CD14-positive monocyte (primary cell): ENCODE measurements at regions of chr9 and their contacts with region 1.

Region 1: DNA sequence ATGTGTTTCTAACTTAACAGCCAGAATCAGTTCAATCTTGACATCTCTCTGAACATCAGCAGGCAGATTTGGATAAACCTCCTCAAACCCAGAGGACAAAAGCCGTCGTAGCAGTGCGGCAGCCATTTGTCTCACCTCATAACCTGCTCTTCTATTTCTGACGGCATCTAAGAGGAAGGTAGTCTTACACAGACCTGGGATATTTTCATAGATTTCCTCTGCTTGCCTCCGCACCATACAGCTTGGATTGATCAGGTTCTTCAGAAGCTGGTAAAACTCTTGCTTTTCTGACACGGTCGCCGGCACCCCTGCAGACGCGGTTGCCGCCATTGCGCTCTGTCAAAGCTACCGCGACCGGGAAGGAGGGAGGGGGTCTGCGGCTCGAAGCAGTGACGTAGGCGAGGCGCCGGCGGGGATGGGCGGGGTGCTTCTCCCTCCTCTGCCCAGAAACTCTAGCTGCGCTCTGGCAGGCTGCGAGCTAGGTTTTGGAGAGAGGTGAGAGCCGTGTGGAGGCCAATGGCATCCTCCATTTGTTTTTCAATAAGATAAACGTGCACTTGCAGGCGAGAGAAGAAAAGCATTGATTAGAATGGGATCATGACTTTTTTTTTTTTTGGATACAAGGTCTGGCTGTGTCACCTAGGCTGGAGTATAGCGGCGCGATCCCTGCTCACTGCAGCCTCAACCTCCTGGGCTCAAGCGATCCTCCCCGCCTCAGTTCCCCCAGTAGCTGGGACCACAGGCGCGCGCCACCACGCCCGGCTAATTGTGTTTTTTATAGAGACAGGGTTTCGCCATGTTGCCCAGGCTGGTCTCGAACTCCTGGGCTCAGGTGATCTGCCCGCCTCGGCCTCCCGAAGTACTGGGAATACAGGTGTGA is at the start of gene RANBP6:
- DNase-seq: peak; percentile 79 to 86 (median 84)
- H3K4me3 ChIP-seq: peak within 1 kb of the TSS; percentile 83 to 99 (median 87)
- H3K4me3 Mint-ChIP-seq: peak within 1 kb of the TSS; percentile 90 to 97
- H3K27ac ChIP-seq: peak within 1 kb of the TSS; percentile 55 to 95
- H3K27ac Mint-ChIP-seq: peak within 1 kb of the TSS; percentile 96 to 97 (median 96)
- H3K4me1 ChIP-seq: peaks cover 19 to 24% of the 10 kb centered on the region in 2 donors
- H3K4me1 Mint-ChIP-seq: peaks cover 21% of the 10 kb centered on the region
- H3K27me3 ChIP-seq: no peaks in the 10 kb centered on the region
- H3K27me3 Mint-ChIP-seq: no peaks in the 10 kb centered on the region
- CTCF ChIP-seq: no peak
- polyA plus RNA-seq, gene RANBP6: 6.1 to 16.0 (median 15.7) TPM

Region 2: GRCh38 chr9:5817869-5818268 is 197.6 kb before region 1 on chr9:
- intact Hi-C with region 1: no loop called
- DNase-seq: no peak
- H3K4me3 ChIP-seq: no peak overlapping the region
- H3K4me3 Mint-ChIP-seq: no peak overlapping the region
- H3K27ac ChIP-seq: no peak overlapping the region
- H3K27ac Mint-ChIP-seq: peak overlapping the region in 2 of 7 donors; percentile 7 to 11
- H3K4me1 ChIP-seq: no peaks in the 10 kb centered on the region
- H3K4me1 Mint-ChIP-seq: peaks cover 8% of the 10 kb centered on the region
- H3K27me3 ChIP-seq: no peaks in the 10 kb centered on the region
- H3K27me3 Mint-ChIP-seq: no peaks in the 10 kb centered on the region
- CTCF ChIP-seq: no peak

Region 3: DNA sequence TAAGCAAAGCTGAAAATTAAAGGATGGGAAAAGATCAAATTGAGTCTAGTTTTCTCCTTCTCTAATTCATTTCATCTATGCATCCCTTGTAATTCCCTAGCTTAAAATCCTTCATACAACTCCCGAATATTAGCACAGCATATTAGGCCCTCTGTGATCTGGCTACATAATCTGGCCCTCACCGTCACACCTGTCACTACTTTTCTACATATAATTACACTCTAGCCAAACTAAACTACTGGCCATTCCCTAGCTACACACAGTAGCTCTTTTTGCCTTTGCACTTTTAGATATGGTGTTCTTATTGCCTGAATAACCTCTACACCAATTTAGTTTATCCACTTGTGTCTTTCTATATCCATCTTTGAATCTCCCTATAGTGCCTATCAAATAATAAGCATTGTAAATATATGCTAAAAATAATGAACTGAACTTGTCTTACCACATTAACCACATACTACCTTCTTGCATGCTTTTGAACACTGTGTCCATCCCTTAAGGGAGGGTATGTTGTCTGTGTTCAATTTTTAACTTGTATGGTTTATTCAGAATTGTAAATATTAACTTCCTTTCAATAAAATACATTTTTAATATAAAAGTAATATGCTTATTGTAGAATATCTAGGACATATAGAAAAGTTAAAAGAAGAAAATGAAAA is 15.9 kb before region 1 on chr9:
- intact Hi-C with region 1: no loop called
- DNase-seq: no peak
- H3K4me3 ChIP-seq: no peak overlapping the region
- H3K4me3 Mint-ChIP-seq: no peak overlapping the region
- H3K27ac ChIP-seq: no peak overlapping the region
- H3K27ac Mint-ChIP-seq: no peak overlapping the region
- H3K4me1 ChIP-seq: no peaks in the 10 kb centered on the region
- H3K4me1 Mint-ChIP-seq: peaks cover 19% of the 10 kb centered on the region
- H3K27me3 ChIP-seq: no peaks in the 10 kb centered on the region
- H3K27me3 Mint-ChIP-seq: no peaks in the 10 kb centered on the region
- CTCF ChIP-seq: no peak

Region 4: DNA sequence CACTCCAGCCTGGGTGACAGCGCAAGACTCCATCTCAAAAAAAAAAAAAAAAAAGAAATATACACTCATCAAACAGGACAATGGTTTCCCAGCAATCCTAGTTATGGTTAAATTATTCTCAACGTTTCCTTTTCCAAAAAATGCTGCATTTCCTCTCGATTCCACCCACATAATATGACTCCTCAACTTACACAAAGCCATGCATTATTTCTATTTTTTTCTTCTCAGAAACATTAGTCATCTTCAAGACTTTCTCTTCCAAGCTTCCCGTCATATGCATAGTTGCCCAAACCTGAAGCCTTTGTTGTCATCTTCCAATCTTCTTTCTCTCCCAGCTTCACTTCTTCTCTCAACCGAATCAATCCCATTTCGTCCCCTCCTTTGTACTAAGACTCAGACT is 61.3 kb after region 1 on chr9:
- intact Hi-C with region 1: loop called in 1 of 2 experiments (anchors 10 kb)
- DNase-seq: no peak
- H3K4me3 ChIP-seq: no peak overlapping the region
- H3K4me3 Mint-ChIP-seq: no peak overlapping the region
- H3K27ac ChIP-seq: no peak overlapping the region
- H3K27ac Mint-ChIP-seq: no peak overlapping the region
- H3K4me1 ChIP-seq: peaks cover 13 to 20% of the 10 kb centered on the region in 2 donors
- H3K4me1 Mint-ChIP-seq: peaks cover 25% of the 10 kb centered on the region
- H3K27me3 ChIP-seq: no peaks in the 10 kb centered on the region
- H3K27me3 Mint-ChIP-seq: peaks cover 0 to 2% (median 1%) of the 10 kb centered on the region in 3 donors
- CTCF ChIP-seq: no peak